Activated T-helper 2 cell treated with anti-CD3 and anti-CD28 coated beads, Interferon-gamma antibody, Interleukin-2, Interleukin-4, amounts not matched to agents 10 μg/mL and 5 μg/mL and 100 μg/mL, durations not matched to agents 14 hours and 24 hours and 36 hours (primary cell): ENCODE measurements at regions of chr6 and their contacts with region 1.

Region 1: GRCh38 chr6:156825475-156825874 is 48.3 kb downstream of the ARID1B start:
- DNase-seq: no peak
- H3K4me3 Mint-ChIP-seq: no peak overlapping the region
- H3K27ac Mint-ChIP-seq: no peak overlapping the region
- H3K4me1 Mint-ChIP-seq: peaks cover 29% of the 10 kb centered on the region
- H3K27me3 Mint-ChIP-seq: no peaks in the 10 kb centered on the region

Region 2: GRCh38 chr6:156674197-156674596 is 151.3 kb before region 1 on chr6:
- intact Hi-C with region 1: no loop called
- DNase-seq: no peak
- H3K4me3 Mint-ChIP-seq: no peak overlapping the region
- H3K27ac Mint-ChIP-seq: no peak overlapping the region
- H3K4me1 Mint-ChIP-seq: no peaks in the 10 kb centered on the region
- H3K27me3 Mint-ChIP-seq: peaks cover 1% of the 10 kb centered on the region

Region 3: DNA sequence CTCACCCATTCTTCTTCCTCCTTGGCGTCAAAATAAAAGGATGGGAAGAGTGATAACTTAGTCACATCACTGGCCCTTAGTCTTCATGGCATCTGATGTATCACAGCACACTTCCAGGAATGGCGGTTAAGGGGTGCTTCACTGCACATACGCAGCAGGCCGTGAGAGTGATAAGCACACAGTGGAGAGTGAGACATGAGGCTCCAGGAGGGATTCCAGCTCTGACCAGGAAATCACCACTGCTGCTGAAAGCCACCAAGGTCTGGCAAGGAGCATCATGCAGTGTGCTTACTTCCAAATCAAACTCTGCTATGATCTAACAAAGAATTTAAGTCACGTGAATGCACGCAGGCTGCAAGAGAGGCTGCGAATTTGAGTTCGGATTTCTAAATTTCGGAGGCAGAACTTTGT is 14.1 kb after region 1 on chr6:
- intact Hi-C with region 1: loop called (anchors 2 kb)
- DNase-seq: no peak
- H3K4me3 Mint-ChIP-seq: no peak overlapping the region
- H3K27ac Mint-ChIP-seq: no peak overlapping the region
- H3K4me1 Mint-ChIP-seq: peaks cover 16% of the 10 kb centered on the region
- H3K27me3 Mint-ChIP-seq: no peaks in the 10 kb centered on the region

Region 4: DNA sequence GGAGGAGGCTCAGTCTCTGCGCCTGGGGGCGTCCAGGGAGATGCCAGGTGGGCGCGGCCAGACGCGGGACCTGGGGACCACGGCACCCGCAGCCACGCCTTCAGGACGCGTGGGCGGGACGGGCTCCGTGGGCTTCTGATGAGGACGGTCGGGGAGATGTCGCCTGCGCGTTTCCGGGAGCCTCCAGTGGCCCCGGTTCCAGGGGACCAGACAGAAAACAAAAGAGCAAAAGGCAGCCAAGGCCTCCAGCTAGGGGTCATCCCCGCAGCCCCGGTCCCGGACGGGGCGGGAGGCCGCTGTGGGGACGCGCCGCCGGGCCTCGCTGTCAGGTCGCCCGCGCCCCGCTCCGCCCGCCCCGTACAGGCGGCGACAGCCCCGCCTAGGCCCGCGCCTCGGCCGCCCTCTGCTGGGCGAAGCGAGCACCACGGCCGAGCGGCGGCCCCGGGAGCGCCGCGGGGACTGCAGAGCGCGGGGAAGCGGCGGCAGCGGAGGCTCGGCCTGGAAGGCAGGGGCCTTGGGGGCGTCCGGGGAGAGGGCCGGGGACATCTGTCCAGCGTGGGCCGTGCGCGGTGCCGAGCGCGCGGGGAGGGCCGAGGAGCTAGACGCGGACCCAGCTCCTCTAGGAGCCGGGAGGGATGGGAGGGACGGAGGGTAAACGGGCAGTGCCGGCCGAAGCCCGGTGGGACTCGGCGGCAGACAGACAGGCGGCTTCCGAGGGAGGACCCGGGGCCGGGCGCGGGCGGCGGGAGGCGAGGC is 449.2 kb after region 1 on chr6:
- intact Hi-C with region 1: no loop called
- DNase-seq: peak; percentile 78
- H3K4me3 Mint-ChIP-seq: peak overlapping the region; percentile 81
- H3K27ac Mint-ChIP-seq: peak overlapping the region; percentile 81
- H3K4me1 Mint-ChIP-seq: peaks cover 8% of the 10 kb centered on the region
- H3K27me3 Mint-ChIP-seq: peaks cover 5% of the 10 kb centered on the region